Right ventricle myocardium superior (tissue), 1 donor: ENCODE measurements at regions of chr9 and their contacts with region 1.

Region 1: GRCh38 chr9:114004221-114004716 is 73.8 kb downstream of the AMBP start:
- DNase-seq: peak; percentile 76
- ATAC-seq: peak; percentile 88

Region 2: DNA sequence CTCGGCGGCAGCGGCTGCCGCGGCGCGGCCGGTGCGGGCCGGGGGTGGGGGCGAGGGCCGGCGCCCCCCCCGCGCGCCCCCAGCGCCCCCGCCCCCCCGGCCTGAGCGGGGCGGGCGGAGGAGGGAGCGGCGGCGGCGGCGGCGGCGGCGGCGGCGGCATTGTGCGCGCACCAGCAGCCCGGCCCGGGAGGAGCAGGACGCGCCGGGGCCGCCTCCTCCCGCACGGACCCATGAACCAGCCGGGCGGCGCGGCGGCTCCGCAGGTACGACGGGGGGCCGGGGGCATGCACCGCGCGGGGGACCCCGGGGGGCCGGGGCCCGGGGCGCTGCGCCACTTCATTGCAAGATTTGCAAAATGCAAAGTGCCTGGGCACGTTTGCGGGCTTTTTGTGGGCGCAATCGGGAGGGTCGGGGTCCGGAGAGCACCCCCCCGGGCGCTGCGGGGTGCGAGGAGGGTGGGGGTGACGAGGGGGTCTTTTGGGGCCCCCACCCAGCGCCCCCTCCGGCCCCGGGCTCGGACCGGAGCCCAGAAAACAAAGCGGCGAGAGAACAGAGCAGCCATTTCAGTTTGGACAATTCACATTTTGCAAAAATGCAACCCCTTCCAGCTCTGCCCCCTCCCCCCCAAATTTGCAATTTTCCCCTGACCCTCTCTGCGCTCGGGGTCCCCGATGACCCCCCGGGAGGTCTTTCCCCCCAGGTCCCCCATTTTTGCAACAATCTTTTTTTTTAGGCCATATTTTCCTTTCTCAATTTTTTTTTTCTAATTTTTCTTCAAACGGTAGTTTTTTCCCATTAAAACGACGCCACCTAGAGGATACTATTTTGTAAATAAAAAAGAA is 127.9 kb before region 1 on chr9 and contains the start of gene ZNF618:
- intact Hi-C with region 1: loop called (anchors 10 kb)
- DNase-seq: peak; percentile 61
- ATAC-seq: peak; percentile 86
- total RNA-seq, gene ZNF618: 2.0 TPM